Endothelial cell of umbilical vein (primary cell): ENCODE measurements at regions of chr4 and their contacts with region 1.

Region 1: GRCh38 chr4:155025762-155026457 is 182.5 kb upstream of the NPY2R start:
- DNase-seq: peak; percentile 85
- H3K4me3 ChIP-seq: peak overlapping the region in 1 of 3 experiments; percentile 21
- H3K27ac ChIP-seq: peak overlapping the region; percentile 73
- H3K4me1 ChIP-seq: peaks cover 11% of the 10 kb centered on the region
- H3K27me3 ChIP-seq: no peaks in the 10 kb centered on the region
- CTCF ChIP-seq: peak; percentile 75 to 79
- POLR2A ChIP-seq: no peak

Region 2: GRCh38 chr4:154807042-154807630 is 218.8 kb before region 1 on chr4:
- CTCF ChIA-PET with region 1: interaction called, 7 read pairs
- POLR2A ChIA-PET with region 1: no interaction called
- dilution Hi-C with region 1: no loop called
- intact Hi-C with region 1: loop called (anchors 2 kb)
- DNase-seq: peak; percentile 61
- H3K4me3 ChIP-seq: peak overlapping the region in 1 of 3 experiments; percentile 17
- H3K27ac ChIP-seq: no peak overlapping the region
- H3K4me1 ChIP-seq: peaks cover 2% of the 10 kb centered on the region
- H3K27me3 ChIP-seq: peaks cover 0 to 6% of the 10 kb centered on the region in 2 experiments
- CTCF ChIP-seq: peak; percentile 32 to 53
- POLR2A ChIP-seq: no peak

Region 3: DNA sequence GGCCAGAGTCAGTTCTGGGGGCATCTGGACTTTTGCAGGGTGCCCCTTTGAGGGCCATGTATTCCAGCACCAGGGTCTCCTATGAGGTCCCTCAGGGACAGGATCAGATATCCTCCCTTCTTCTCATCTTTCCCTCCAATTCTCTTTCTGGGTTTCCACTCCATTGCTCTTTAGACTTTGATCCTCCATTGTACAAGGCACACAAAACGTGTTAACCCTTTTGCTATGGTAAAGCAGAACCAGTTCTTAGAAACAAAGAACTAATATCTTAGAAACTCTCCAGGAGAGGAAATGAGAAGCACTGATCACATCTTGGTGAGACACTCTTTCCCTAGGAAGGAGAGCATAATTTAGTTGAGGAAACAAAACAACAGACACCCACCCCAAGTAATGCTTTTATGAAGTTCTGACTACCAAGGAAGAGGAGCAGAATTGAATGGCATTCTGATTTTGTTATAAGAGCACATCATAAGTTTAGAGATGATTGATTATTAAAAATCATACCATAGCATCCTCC is 18.2 kb before region 1 on chr4:
- CTCF ChIA-PET with region 1: interaction called, 7 read pairs
- POLR2A ChIA-PET with region 1: no interaction called
- dilution Hi-C with region 1: no loop called
- intact Hi-C with region 1: loop called (anchors 1 kb)
- DNase-seq: no peak
- H3K4me3 ChIP-seq: no peak overlapping the region
- H3K27ac ChIP-seq: peak overlapping the region; percentile 23
- H3K4me1 ChIP-seq: peaks cover 11% of the 10 kb centered on the region
- H3K27me3 ChIP-seq: no peaks in the 10 kb centered on the region
- CTCF ChIP-seq: no peak
- POLR2A ChIP-seq: no peak

Region 4: GRCh38 chr4:155170569-155170968 is 144.7 kb after region 1 on chr4:
- CTCF ChIA-PET with region 1: interaction called, 12 read pairs
- POLR2A ChIA-PET with region 1: no interaction called
- dilution Hi-C with region 1: no loop called
- intact Hi-C with region 1: loop called (anchors 5 kb)
- DNase-seq: no peak
- H3K4me3 ChIP-seq: no peak overlapping the region
- H3K27ac ChIP-seq: no peak overlapping the region
- H3K4me1 ChIP-seq: no peaks in the 10 kb centered on the region
- H3K27me3 ChIP-seq: no peaks in the 10 kb centered on the region
- CTCF ChIP-seq: no peak
- POLR2A ChIP-seq: no peak

Region 5: GRCh38 chr4:155207534-155208257 is 181.8 kb after region 1 on chr4:
- CTCF ChIA-PET with region 1: interaction called, 8 read pairs
- POLR2A ChIA-PET with region 1: no interaction called
- dilution Hi-C with region 1: no loop called
- intact Hi-C with region 1: loop called (anchors 1 kb)
- DNase-seq: peak; percentile 26
- H3K4me3 ChIP-seq: peak overlapping the region in 2 of 3 experiments; percentile 14 to 61
- H3K27ac ChIP-seq: no peak overlapping the region
- H3K4me1 ChIP-seq: peaks cover 7% of the 10 kb centered on the region
- H3K27me3 ChIP-seq: peaks cover 23 to 32% of the 10 kb centered on the region in 2 experiments
- CTCF ChIP-seq: peak; percentile 15 to 31
- POLR2A ChIP-seq: no peak

Region 6: DNA sequence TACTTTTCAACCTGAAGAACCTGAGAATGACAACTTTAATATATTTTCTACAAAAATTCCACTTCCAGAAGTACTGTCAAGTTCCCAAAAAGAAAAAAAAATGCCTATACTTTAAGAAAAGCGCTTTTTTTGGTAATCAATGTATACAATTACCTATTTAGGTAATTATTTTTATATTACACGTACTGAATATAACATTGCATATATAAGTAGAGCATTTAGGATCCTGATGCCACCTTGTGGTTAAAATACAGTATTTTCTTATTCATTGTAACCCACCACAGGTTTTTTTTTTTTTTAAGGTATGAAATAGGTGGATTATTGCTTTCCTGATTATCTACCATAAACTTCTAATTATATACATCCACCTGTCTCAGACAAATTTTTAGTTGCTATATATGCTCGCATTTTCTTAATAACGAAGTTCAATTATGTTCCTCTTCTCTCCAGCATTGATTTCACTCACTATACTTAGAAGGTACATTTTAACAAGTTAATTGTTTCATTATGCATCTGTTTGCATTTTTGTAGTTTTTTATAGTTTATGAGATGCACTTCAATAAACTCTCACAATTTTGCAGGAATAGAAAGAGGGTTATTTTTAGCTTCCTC is 345.6 kb after region 1 on chr4:
- CTCF ChIA-PET with region 1: interaction called, 8 read pairs
- POLR2A ChIA-PET with region 1: no interaction called
- dilution Hi-C with region 1: no loop called
- intact Hi-C with region 1: loop called (anchors 1 kb)
- DNase-seq: peak; percentile 38
- H3K4me3 ChIP-seq: no peak overlapping the region
- H3K27ac ChIP-seq: no peak overlapping the region
- H3K4me1 ChIP-seq: peaks cover 4% of the 10 kb centered on the region
- H3K27me3 ChIP-seq: peaks cover 0 to 6% of the 10 kb centered on the region in 2 experiments
- CTCF ChIP-seq: peak in 1 of 2 donors; percentile 17
- POLR2A ChIP-seq: no peak

Region 7: DNA sequence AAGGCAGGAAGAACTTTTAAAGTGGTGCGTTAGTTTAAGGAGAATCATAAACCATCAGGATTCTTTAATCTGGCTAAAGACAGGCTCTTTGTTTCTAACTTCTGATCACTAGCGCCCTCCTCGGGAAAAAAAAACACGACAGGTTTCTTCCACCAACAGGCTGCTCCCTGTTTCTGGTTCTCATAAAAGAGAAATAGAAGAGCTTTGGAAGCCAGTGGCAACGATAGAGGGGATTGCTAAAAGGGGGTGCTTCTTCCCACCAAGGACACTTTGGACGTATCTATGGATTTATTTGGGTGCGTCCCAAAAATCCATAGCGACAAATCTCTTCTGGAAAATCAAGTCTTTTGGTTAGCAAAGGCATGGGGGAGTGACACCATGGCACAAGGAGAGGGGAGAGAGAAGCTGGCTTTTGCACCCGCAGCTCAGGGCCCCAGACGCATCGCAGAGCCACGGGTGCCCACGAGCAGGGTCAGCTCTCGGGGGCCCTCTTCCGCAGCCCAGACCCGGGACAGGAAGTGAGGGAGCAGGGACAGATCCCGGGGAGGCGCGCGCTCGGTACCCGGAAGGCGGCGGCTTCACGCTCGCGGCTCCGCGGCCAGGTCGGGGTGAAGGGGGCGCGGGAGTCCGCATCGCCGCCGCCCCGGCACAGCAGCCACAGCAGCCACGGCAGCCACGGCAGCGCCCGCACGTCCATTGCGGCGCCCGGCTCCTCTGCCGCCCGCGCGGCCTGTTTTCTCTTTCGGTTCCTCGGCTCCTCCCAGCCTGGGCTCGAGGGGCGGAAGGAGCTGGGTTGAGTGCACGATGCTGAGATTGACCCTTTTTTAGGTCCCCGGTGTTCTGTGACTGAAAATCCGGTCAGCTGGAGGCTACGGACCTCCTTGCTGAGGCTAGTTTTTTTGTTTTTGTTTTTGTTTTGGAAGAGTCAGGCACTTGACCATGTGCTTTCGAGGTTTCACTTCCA is 927.5 kb after region 1 on chr4 and contains the start of gene CTSO:
- CTCF ChIA-PET with region 1: interaction called, 5 read pairs
- POLR2A ChIA-PET with region 1: no interaction called
- dilution Hi-C with region 1: no loop called
- intact Hi-C with region 1: loop called (anchors 1 kb)
- DNase-seq: peak; percentile 88
- H3K4me3 ChIP-seq: peak within 1 kb of the TSS; percentile 54 to 86 (median 79)
- H3K27ac ChIP-seq: peak within 1 kb of the TSS; percentile 92
- H3K4me1 ChIP-seq: peaks cover 6% of the 10 kb centered on the region
- H3K27me3 ChIP-seq: no peaks in the 10 kb centered on the region
- CTCF ChIP-seq: peak in 1 of 2 donors; percentile 58
- POLR2A ChIP-seq: peak; percentile 83
- total RNA-seq, gene CTSO: 6.7 and 7.9 TPM in 2 replicates